Activated CD8-positive, alpha-beta memory T cell treated with anti-CD3 and anti-CD28 coated beads, Interleukin-2, amount 10 ng/mL, durations not matched to agents 7 days and 5 days (primary cell): ENCODE measurements at regions of chr1 and their contacts with region 1.

Region 1: DNA sequence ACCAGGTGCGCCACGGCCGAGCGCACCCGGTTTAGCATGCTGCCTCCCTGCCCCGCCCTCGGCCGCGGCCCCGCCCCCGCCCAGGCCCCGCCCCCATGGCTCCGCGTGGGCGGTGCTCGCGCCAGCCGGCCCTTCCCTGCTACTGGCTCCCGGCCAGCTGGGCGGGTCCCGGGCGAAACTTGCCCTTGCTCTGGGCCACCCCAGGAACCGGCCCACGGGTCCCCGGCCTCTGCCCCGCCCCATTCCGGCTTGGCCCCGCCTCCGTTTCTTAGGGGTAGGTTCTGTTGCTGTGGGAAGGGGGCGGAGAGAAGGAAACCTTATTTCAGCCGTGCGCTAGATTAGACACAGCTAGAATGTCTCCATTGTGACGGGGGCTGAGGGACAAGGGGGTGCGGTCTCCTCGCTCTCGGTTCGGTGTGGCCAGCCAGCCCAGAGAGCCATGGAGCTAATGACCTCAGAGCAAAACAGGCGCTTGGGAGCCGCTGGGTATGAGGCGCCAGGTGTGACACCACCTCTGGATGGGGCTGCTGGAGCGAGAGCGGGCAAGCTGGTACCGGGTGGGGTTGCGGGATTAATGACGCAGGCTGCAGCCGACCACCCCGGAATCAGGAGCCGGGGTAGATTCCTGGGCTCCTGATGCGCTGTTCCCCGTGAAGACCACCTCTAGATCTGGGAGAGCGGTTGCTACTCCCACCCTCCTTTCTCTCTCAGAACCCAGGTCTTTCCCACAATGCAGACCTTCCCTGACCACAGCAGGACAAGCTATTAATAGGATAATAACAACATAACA is at the start of gene PPM1J:
- DNase-seq: peak; percentile 99
- ATAC-seq: peak; percentile 93
- H3K4me3 Mint-ChIP-seq: peak within 1 kb of the TSS; percentile 80
- H3K27ac Mint-ChIP-seq: peak within 1 kb of the TSS; percentile 69
- H3K4me1 Mint-ChIP-seq: peaks cover 24% of the 10 kb centered on the region
- H3K27me3 Mint-ChIP-seq: peaks cover 40% of the 10 kb centered on the region
- total RNA-seq, gene PPM1J: 0.26 TPM in 1 of 2 experiments, not detected in the other

Region 2: GRCh38 chr1:112803906-112804762 is 88.7 kb after region 1 on chr1:
- CTCF ChIA-PET with region 1: interaction called, 219 read pairs
- DNase-seq: peak; percentile 71
- ATAC-seq: peak; percentile 89
- H3K4me3 Mint-ChIP-seq: no peak overlapping the region
- H3K27ac Mint-ChIP-seq: no peak overlapping the region
- H3K4me1 Mint-ChIP-seq: no peaks in the 10 kb centered on the region
- H3K27me3 Mint-ChIP-seq: peaks cover 11% of the 10 kb centered on the region

Region 3: GRCh38 chr1:112815376-112815775 is 99.9 kb after region 1 on chr1:
- CTCF ChIA-PET with region 1: no interaction called
- DNase-seq: no peak
- ATAC-seq: no peak
- H3K4me3 Mint-ChIP-seq: no peak overlapping the region
- H3K27ac Mint-ChIP-seq: no peak overlapping the region
- H3K4me1 Mint-ChIP-seq: peaks cover 2% of the 10 kb centered on the region
- H3K27me3 Mint-ChIP-seq: peaks cover 22% of the 10 kb centered on the region

Region 4: GRCh38 chr1:113042285-113043143 is 327.1 kb after region 1 on chr1:
- CTCF ChIA-PET with region 1: interaction called, 24 read pairs
- DNase-seq: peak; percentile 56
- ATAC-seq: no peak
- H3K4me3 Mint-ChIP-seq: no peak overlapping the region
- H3K27ac Mint-ChIP-seq: peak overlapping the region; percentile 25
- H3K4me1 Mint-ChIP-seq: peaks cover 30% of the 10 kb centered on the region
- H3K27me3 Mint-ChIP-seq: no peaks in the 10 kb centered on the region